Activated CD4-positive, alpha-beta memory T cell treated with anti-CD3 and anti-CD28 coated beads for 36 hours (primary cell): ENCODE measurements at regions of chr12 and their contacts with region 1.

Region 1: GRCh38 chr12:64890873-64891468 is 66.5 kb downstream of the TBC1D30 start:
- DNase-seq: no peak
- H3K4me3 Mint-ChIP-seq: no peak overlapping the region
- H3K27ac Mint-ChIP-seq: no peak overlapping the region
- H3K4me1 Mint-ChIP-seq: peaks cover 1% of the 10 kb centered on the region
- H3K27me3 Mint-ChIP-seq: peaks cover 19% of the 10 kb centered on the region

Region 2: GRCh38 chr12:64903479-64904152 is 12.6 kb after region 1 on chr12:
- CTCF ChIA-PET with region 1: interaction called, 11 read pairs
- POLR2A ChIA-PET with region 1: no interaction called
- intact Hi-C with region 1: no loop called
- DNase-seq: no peak
- H3K4me3 Mint-ChIP-seq: no peak overlapping the region
- H3K27ac Mint-ChIP-seq: no peak overlapping the region
- H3K4me1 Mint-ChIP-seq: no peaks in the 10 kb centered on the region
- H3K27me3 Mint-ChIP-seq: no peaks in the 10 kb centered on the region

Region 3: DNA sequence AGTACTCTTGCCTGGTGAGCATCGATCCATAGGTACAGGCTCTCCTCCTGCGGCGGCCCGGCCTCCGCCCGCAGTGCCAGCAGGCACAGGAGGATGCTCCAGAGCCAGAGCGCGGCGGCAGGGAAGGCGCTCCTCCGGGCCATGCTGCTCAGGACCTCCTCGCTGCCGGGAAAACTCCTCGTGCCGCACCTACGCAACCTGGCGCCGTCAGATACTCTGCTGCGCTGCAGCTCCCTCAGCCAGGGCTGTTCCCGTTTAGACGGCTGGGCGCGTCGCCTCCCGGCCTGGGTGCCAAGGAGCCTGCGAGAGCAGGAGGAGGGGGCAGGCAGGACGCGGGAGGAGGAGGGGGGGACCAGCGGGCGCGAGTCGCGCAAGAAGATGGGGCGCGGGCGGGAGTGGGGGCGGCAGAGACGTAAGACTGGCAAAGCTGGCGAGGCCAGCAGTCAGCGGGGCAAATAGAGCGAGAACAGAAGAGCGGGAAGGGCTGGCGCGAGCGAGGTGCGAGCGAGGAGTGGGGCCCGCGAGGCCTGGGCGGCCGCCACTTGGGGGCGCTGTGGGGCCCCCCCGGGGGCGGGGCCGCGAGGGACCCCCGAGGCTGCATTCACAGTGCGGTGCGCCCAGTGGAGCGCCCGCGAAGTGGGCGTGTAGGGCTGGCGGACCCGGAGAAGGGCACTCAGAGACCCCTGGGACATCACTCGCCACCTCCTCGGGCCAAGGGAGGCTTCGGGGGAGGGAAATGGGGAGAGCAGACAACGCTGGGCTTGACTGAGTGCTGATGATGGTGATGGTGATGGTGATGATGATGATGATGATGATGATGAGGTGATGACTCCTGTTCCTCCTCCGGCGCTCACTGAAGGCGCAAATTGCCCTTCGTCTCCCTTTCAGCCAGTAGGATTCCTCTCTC is 230.3 kb after region 1 on chr12 and contains the start of gene WIF1:
- CTCF ChIA-PET with region 1: interaction called, 27 read pairs
- POLR2A ChIA-PET with region 1: no interaction called
- intact Hi-C with region 1: loop called (anchors 1 kb)
- DNase-seq: peak; percentile 29
- H3K4me3 Mint-ChIP-seq: no peak within 1 kb of the TSS
- H3K27ac Mint-ChIP-seq: no peak within 1 kb of the TSS
- H3K4me1 Mint-ChIP-seq: peaks cover 6% of the 10 kb centered on the region
- H3K27me3 Mint-ChIP-seq: peaks cover 35% of the 10 kb centered on the region
- total RNA-seq, gene WIF1: 0.12 TPM in 1 of 2 experiments, not detected in the other

Region 4: GRCh38 chr12:65556681-65557437 is 665.9 kb after region 1 on chr12:
- CTCF ChIA-PET with region 1: no interaction called
- POLR2A ChIA-PET with region 1: no interaction called
- intact Hi-C with region 1: loop called (anchors 2 kb)
- DNase-seq: peak; percentile 71
- H3K4me3 Mint-ChIP-seq: no peak overlapping the region
- H3K27ac Mint-ChIP-seq: no peak overlapping the region
- H3K4me1 Mint-ChIP-seq: peaks cover 7% of the 10 kb centered on the region
- H3K27me3 Mint-ChIP-seq: peaks cover 17% of the 10 kb centered on the region

Region 5: GRCh38 chr12:66107451-66107915 is 1216.5 kb after region 1 on chr12:
- CTCF ChIA-PET with region 1: interaction called, 7 read pairs
- POLR2A ChIA-PET with region 1: no interaction called
- intact Hi-C with region 1: loop called (anchors 1 kb)
- DNase-seq: peak; percentile 21
- H3K4me3 Mint-ChIP-seq: no peak overlapping the region
- H3K27ac Mint-ChIP-seq: no peak overlapping the region
- H3K4me1 Mint-ChIP-seq: peaks cover 2% of the 10 kb centered on the region
- H3K27me3 Mint-ChIP-seq: peaks cover 10% of the 10 kb centered on the region